Activated CD8-positive, alpha-beta memory T cell treated with anti-CD3 and anti-CD28 coated beads, Interleukin-2, amount 10 ng/mL, durations not matched to agents 7 days and 5 days (primary cell): ENCODE measurements at regions of chr3 and their contacts with region 1.

Region 1: GRCh38 chr3:120417272-120417911 is 33.4 kb downstream of the FSTL1 start:
- DNase-seq: peak; percentile 95
- ATAC-seq: peak; percentile 99
- H3K4me3 Mint-ChIP-seq: peak overlapping the region; percentile 81
- H3K27ac Mint-ChIP-seq: peak overlapping the region; percentile 66
- H3K4me1 Mint-ChIP-seq: peaks cover 23% of the 10 kb centered on the region
- H3K27me3 Mint-ChIP-seq: peaks cover 10% of the 10 kb centered on the region

Region 2: DNA sequence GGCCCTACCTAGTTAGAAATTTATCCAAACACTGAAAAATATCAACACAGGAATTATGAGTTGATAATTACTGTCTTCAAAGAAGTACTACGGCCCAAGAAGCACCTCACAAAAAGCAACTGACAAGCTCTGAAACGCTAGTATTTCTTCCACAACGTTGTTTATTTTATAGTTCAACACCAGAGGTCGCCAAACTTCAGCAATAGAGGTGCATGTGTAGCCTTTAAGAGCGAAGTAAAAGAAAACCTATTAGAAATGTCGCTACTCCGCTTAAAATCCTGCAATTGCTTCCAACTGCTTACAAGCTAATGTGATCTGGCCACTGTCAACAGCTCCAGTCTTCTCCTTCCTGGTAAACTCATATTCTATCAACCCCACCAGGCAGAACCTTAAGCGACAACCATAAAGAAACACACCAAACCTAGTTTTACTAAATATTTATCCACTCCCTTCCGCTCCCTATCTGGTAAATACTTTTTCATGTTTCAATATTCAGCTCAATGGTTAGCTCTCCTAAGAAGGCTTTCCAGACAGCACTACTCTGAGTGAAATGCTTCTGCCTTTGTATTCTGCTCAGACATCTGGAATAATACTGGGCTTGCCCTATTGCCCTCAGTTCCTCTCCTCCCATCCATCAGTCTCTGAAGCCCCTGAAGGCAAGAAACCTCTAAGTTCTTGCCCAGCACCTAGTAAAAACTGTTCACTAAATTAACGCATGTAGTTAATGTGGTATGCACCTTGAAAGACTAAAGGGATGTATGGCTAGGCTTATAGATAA is 525.3 kb before region 1 on chr3:
- CTCF ChIA-PET with region 1: interaction called, 16 read pairs
- DNase-seq: peak; percentile 52
- ATAC-seq: peak; percentile 68
- H3K4me3 Mint-ChIP-seq: no peak overlapping the region
- H3K27ac Mint-ChIP-seq: no peak overlapping the region
- H3K4me1 Mint-ChIP-seq: peaks cover 7% of the 10 kb centered on the region
- H3K27me3 Mint-ChIP-seq: no peaks in the 10 kb centered on the region

Region 3: GRCh38 chr3:120245386-120245785 is 172.0 kb before region 1 on chr3:
- CTCF ChIA-PET with region 1: interaction called, 74 read pairs
- DNase-seq: no peak
- ATAC-seq: no peak
- H3K4me3 Mint-ChIP-seq: no peak overlapping the region
- H3K27ac Mint-ChIP-seq: no peak overlapping the region
- H3K4me1 Mint-ChIP-seq: no peaks in the 10 kb centered on the region
- H3K27me3 Mint-ChIP-seq: peaks cover 22% of the 10 kb centered on the region

Region 4: GRCh38 chr3:120404876-120405275 is 12.5 kb before region 1 on chr3:
- CTCF ChIA-PET with region 1: interaction called, 24 read pairs
- DNase-seq: no peak
- ATAC-seq: no peak
- H3K4me3 Mint-ChIP-seq: no peak overlapping the region
- H3K27ac Mint-ChIP-seq: no peak overlapping the region
- H3K4me1 Mint-ChIP-seq: no peaks in the 10 kb centered on the region
- H3K27me3 Mint-ChIP-seq: no peaks in the 10 kb centered on the region

Region 5: DNA sequence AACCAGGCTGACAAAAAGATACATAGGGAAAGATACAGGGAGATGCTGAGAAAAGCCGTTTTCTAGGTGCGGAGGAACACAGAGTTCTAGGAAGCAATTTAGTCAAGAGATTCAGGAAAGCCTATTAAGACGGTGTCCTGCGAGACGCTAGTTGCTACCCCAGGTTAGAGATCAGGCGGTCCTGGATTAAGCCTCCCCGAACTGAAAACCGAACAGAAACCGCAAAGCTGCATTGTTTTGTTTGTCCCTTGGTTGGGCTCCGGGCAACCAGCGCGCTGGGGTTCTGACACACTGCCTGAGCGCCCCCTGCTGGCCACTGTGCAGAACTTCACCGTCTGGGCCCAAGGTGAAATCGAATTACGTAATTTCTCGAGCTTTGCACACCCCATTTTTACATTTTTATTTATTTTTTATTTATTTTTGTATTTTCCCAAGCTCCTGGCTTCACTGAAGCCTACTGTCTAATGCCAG is 141.4 kb after region 1 on chr3:
- CTCF ChIA-PET with region 1: interaction called, 120 read pairs
- DNase-seq: peak; percentile 90
- ATAC-seq: peak; percentile 93
- H3K4me3 Mint-ChIP-seq: peak overlapping the region; percentile 78
- H3K27ac Mint-ChIP-seq: peak overlapping the region; percentile 71
- H3K4me1 Mint-ChIP-seq: peaks cover 12% of the 10 kb centered on the region
- H3K27me3 Mint-ChIP-seq: peaks cover 7% of the 10 kb centered on the region

Region 6: GRCh38 chr3:121894301-121894990 is 1477.1 kb after region 1 on chr3 and contains the start of gene SLC15A2:
- CTCF ChIA-PET with region 1: no interaction called
- DNase-seq: no peak
- ATAC-seq: no peak
- H3K4me3 Mint-ChIP-seq: no peak within 1 kb of the TSS
- H3K27ac Mint-ChIP-seq: no peak within 1 kb of the TSS
- H3K4me1 Mint-ChIP-seq: no peaks in the 10 kb centered on the region
- H3K27me3 Mint-ChIP-seq: no peaks in the 10 kb centered on the region
- total RNA-seq, gene SLC15A2: 2.4 to 4.8 TPM